Aorta (tissue), 5 donors: ENCODE measurements at regions of chr17 and their contacts with region 1.

Region 1: GRCh38 chr17:50841949-50842354 is 6.6 kb downstream of the WFIKKN2 start:
- DNase-seq: peak; percentile 71 to 91
- ATAC-seq: peak; percentile 79
- H3K4me3 ChIP-seq: no peak overlapping the region
- H3K27ac ChIP-seq: no peak overlapping the region
- H3K4me1 ChIP-seq: no peaks in the 10 kb centered on the region
- H3K27me3 ChIP-seq: no peaks in the 10 kb centered on the region

Region 2: DNA sequence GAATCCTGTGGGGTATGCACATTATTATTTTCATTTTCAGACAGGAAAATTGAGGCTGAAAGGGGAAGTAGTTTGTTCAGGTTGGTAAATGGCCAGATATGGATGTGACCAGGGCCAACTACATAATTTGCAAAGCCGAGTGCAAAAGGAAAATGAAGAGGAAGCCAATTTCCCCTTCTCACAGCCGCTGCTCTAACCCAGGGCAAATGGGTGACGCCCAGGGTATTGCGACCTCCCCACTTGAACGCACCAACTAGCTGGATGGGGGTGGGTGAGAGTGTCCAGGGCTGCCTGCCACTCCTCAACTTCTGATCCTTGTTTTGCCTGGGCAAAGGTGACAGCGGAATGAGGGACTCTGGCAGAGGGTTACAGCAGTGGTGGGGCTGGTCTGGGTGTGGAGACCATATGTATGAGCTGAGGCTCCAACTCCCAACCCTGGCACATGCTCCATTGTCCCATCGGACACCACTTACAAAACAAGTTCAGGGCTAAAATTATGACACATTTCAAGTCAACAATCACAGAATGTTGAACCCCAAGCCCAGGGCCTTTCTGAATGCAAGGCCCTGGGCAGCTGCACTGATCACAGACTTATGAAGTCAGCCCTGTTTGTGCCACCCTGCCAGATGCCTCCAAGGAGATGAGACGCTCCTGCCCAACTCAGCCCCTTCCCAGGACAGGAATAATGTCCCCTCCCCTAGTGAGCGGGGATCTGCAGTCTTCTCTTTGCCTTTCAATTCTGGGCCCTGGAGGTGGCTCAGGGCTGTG is 76.3 kb before region 1 on chr17:
- intact Hi-C with region 1: no loop called
- DNase-seq: peak in 1 of 2 donors; percentile 57
- ATAC-seq: peak; percentile 66
- H3K4me3 ChIP-seq: no peak overlapping the region
- H3K27ac ChIP-seq: no peak overlapping the region
- H3K4me1 ChIP-seq: no peaks in the 10 kb centered on the region
- H3K27me3 ChIP-seq: no peaks in the 10 kb centered on the region

Region 3: GRCh38 chr17:50783193-50783660 is 58.7 kb before region 1 on chr17:
- intact Hi-C with region 1: loop called (anchors 1 to 2 kb)
- DNase-seq: peak; percentile 85 to 95
- ATAC-seq: peak; percentile 90
- H3K4me3 ChIP-seq: no peak overlapping the region
- H3K27ac ChIP-seq: no peak overlapping the region
- H3K4me1 ChIP-seq: no peaks in the 10 kb centered on the region
- H3K27me3 ChIP-seq: no peaks in the 10 kb centered on the region

Region 4: GRCh38 chr17:50816771-50817751 is 24.9 kb before region 1 on chr17:
- intact Hi-C with region 1: loop called in 1 of 2 experiments (anchors 2 kb)
- DNase-seq: peak; percentile 63 to 89
- ATAC-seq: peak; percentile 77
- H3K4me3 ChIP-seq: no peak overlapping the region
- H3K27ac ChIP-seq: no peak overlapping the region
- H3K4me1 ChIP-seq: no peaks in the 10 kb centered on the region
- H3K27me3 ChIP-seq: no peaks in the 10 kb centered on the region

Region 5: GRCh38 chr17:50919321-50920085 is 77.6 kb after region 1 on chr17:
- intact Hi-C with region 1: no loop called
- DNase-seq: peak; percentile 96
- ATAC-seq: peak; percentile 94
- H3K4me3 ChIP-seq: no peak overlapping the region
- H3K27ac ChIP-seq: peak overlapping the region; percentile 10 to 23
- H3K4me1 ChIP-seq: no peaks in the 10 kb centered on the region
- H3K27me3 ChIP-seq: no peaks in the 10 kb centered on the region